Naive thymus-derived CD4-positive, alpha-beta T cell (primary cell): ENCODE measurements at regions of chr19 and their contacts with region 1.

Region 1: GRCh38 chr19:43595999-43596841 is at the starts of genes IRGQ and ZNF576:
- DNase-seq: peak; percentile 98 to 100 (median 99)
- ATAC-seq: peak; percentile 88
- H3K4me3 ChIP-seq: peak within 1 kb of the TSS; percentile 81
- H3K4me3 Mint-ChIP-seq: peak within 1 kb of the TSS; percentile 84 to 98 (median 95)
- H3K27ac ChIP-seq: peak within 1 kb of the TSS; percentile 95
- H3K27ac Mint-ChIP-seq: peak within 1 kb of the TSS; percentile 98 to 100 (median 100)
- H3K4me1 ChIP-seq: peaks cover 16 to 28% of the 10 kb centered on the region in 2 donors
- H3K4me1 Mint-ChIP-seq: peaks cover 27 to 47% (median 37%) of the 10 kb centered on the region in 7 donors
- H3K27me3 ChIP-seq: no peaks in the 10 kb centered on the region
- H3K27me3 Mint-ChIP-seq: peaks cover 0 to 4% (median 0%) of the 10 kb centered on the region in 5 donors
- total RNA-seq, gene IRGQ: 13.5 to 43.8 (median 18.9) TPM
- total RNA-seq, gene ZNF576: 9.4 to 20.6 (median 19.5) TPM

Region 2: GRCh38 chr19:43446746-43447489 is 149.3 kb before region 1 on chr19:
- CTCF ChIA-PET with region 1: interaction called, 22 read pairs
- POLR2A ChIA-PET with region 1: interaction called, 5 read pairs
- intact Hi-C with region 1: loop called (anchors 1 kb)
- DNase-seq: peak; percentile 70 to 84 (median 78)
- ATAC-seq: peak; percentile 90
- H3K4me3 ChIP-seq: no peak overlapping the region
- H3K4me3 Mint-ChIP-seq: peak overlapping the region in 1 of 10 donors; percentile 13
- H3K27ac ChIP-seq: no peak overlapping the region
- H3K27ac Mint-ChIP-seq: peak overlapping the region in 8 of 9 donors; percentile 7 to 96 (median 86)
- H3K4me1 ChIP-seq: peaks cover 3 to 4% of the 10 kb centered on the region in 2 donors
- H3K4me1 Mint-ChIP-seq: peaks cover 23 to 46% (median 32%) of the 10 kb centered on the region in 7 donors
- H3K27me3 ChIP-seq: no peaks in the 10 kb centered on the region
- H3K27me3 Mint-ChIP-seq: peaks cover 0 to 2% (median 0%) of the 10 kb centered on the region in 5 donors

Region 3: GRCh38 chr19:43503501-43504425 is 92.5 kb before region 1 on chr19:
- CTCF ChIA-PET with region 1: no interaction called
- POLR2A ChIA-PET with region 1: interaction called, 3 read pairs
- intact Hi-C with region 1: loop called in 1 of 2 experiments (anchors 1 kb)
- DNase-seq: peak; percentile 93 to 99 (median 98)
- ATAC-seq: peak; percentile 99
- H3K4me3 ChIP-seq: peak overlapping the region; percentile 98
- H3K4me3 Mint-ChIP-seq: peak overlapping the region; percentile 90 to 98 (median 92)
- H3K27ac ChIP-seq: peak overlapping the region; percentile 96
- H3K27ac Mint-ChIP-seq: peak overlapping the region; percentile 90 to 100 (median 96)
- H3K4me1 ChIP-seq: peaks cover 5 to 18% of the 10 kb centered on the region in 2 donors
- H3K4me1 Mint-ChIP-seq: peaks cover 25 to 59% (median 39%) of the 10 kb centered on the region in 7 donors
- H3K27me3 ChIP-seq: no peaks in the 10 kb centered on the region
- H3K27me3 Mint-ChIP-seq: no peaks in the 10 kb centered on the region

Region 4: GRCh38 chr19:43555185-43555770 is 40.9 kb before region 1 on chr19:
- CTCF ChIA-PET with region 1: interaction called, 122 read pairs
- POLR2A ChIA-PET with region 1: interaction called, 46 read pairs
- intact Hi-C with region 1: loop called (anchors 1 kb)
- DNase-seq: peak; percentile 59 to 90 (median 84)
- ATAC-seq: peak; percentile 98
- H3K4me3 ChIP-seq: no peak overlapping the region
- H3K4me3 Mint-ChIP-seq: no peak overlapping the region
- H3K27ac ChIP-seq: peak overlapping the region; percentile 1
- H3K27ac Mint-ChIP-seq: peak overlapping the region; percentile 44 to 89 (median 58)
- H3K4me1 ChIP-seq: peaks cover 3 to 10% of the 10 kb centered on the region in 2 donors
- H3K4me1 Mint-ChIP-seq: peaks cover 11 to 32% (median 23%) of the 10 kb centered on the region in 7 donors
- H3K27me3 ChIP-seq: no peaks in the 10 kb centered on the region
- H3K27me3 Mint-ChIP-seq: no peaks in the 10 kb centered on the region

Region 5: GRCh38 chr19:43619262-43620060 is 23.2 kb after region 1 on chr19 and contains the start of gene ZNF428:
- CTCF ChIA-PET with region 1: no interaction called
- POLR2A ChIA-PET with region 1: interaction called, 5 read pairs
- intact Hi-C with region 1: loop called (anchors 1 kb)
- DNase-seq: peak; percentile 77 to 91 (median 84)
- ATAC-seq: peak; percentile 93
- H3K4me3 ChIP-seq: peak within 1 kb of the TSS; percentile 63
- H3K4me3 Mint-ChIP-seq: peak within 1 kb of the TSS; percentile 95 to 99 (median 98)
- H3K27ac ChIP-seq: peak within 1 kb of the TSS; percentile 83
- H3K27ac Mint-ChIP-seq: peak within 1 kb of the TSS; percentile 93 to 99 (median 97)
- H3K4me1 ChIP-seq: peaks cover 9 to 12% of the 10 kb centered on the region in 2 donors
- H3K4me1 Mint-ChIP-seq: peaks cover 18 to 59% (median 36%) of the 10 kb centered on the region in 7 donors
- H3K27me3 ChIP-seq: no peaks in the 10 kb centered on the region
- H3K27me3 Mint-ChIP-seq: no peaks in the 10 kb centered on the region
- total RNA-seq, gene ZNF428: 21.7 to 29.1 (median 25.9) TPM

Region 6: DNA sequence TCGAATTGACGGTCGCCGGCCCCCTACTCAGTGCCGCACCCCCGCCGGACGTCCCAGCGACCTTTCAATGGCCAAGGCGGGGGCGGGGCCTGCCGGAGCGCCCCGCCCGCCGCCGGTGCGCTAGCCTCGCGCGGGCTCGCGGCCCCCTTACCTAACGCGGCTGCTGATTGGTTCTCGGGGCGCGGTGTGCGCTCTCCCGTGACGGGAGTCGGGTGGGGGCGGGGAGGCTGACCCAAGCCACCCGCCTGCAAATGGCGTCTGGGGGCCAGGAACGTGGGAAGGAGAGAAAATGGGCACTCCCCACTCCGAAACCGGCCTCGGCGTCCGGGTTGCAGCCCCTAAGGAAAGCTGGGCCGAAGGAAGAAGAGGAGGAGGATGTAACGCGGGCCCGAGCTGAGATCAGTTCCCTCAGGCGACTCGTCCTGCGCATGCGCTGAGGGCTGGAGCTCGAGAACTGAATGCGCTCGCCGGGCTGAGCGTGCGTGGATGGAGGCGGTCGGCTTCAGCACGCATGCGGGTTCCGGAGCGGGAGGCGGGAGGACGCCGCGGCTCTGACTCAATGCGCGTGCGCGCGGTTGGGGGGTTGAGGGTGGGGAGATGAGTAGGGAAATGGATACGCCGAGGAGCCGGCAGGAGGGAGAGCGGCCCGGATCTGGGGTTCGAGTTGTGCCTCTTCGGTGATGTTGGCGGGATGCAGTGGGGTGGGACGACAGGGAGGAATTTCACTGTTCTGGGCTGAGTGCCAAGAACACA is 158.5 kb after region 1 on chr19 and contains the start of gene SMG9:
- CTCF ChIA-PET with region 1: no interaction called
- POLR2A ChIA-PET with region 1: no interaction called
- intact Hi-C with region 1: loop called (anchors 1 kb)
- DNase-seq: peak; percentile 98 to 100 (median 99)
- ATAC-seq: peak; percentile 92
- H3K4me3 ChIP-seq: peak within 1 kb of the TSS; percentile 95
- H3K4me3 Mint-ChIP-seq: peak within 1 kb of the TSS; percentile 94 to 99 (median 97)
- H3K27ac ChIP-seq: peak within 1 kb of the TSS; percentile 85
- H3K27ac Mint-ChIP-seq: peak within 1 kb of the TSS; percentile 96 to 100 (median 98)
- H3K4me1 ChIP-seq: peaks cover 20 to 27% of the 10 kb centered on the region in 2 donors
- H3K4me1 Mint-ChIP-seq: peaks cover 5 to 62% (median 45%) of the 10 kb centered on the region in 7 donors
- H3K27me3 ChIP-seq: no peaks in the 10 kb centered on the region
- H3K27me3 Mint-ChIP-seq: peaks cover 0 to 6% (median 0%) of the 10 kb centered on the region in 5 donors
- total RNA-seq, gene SMG9: 48.5 to 75.9 (median 53.9) TPM